ENCODE measurements at regions of chr4 and their contacts with region 1.

Region 1: DNA sequence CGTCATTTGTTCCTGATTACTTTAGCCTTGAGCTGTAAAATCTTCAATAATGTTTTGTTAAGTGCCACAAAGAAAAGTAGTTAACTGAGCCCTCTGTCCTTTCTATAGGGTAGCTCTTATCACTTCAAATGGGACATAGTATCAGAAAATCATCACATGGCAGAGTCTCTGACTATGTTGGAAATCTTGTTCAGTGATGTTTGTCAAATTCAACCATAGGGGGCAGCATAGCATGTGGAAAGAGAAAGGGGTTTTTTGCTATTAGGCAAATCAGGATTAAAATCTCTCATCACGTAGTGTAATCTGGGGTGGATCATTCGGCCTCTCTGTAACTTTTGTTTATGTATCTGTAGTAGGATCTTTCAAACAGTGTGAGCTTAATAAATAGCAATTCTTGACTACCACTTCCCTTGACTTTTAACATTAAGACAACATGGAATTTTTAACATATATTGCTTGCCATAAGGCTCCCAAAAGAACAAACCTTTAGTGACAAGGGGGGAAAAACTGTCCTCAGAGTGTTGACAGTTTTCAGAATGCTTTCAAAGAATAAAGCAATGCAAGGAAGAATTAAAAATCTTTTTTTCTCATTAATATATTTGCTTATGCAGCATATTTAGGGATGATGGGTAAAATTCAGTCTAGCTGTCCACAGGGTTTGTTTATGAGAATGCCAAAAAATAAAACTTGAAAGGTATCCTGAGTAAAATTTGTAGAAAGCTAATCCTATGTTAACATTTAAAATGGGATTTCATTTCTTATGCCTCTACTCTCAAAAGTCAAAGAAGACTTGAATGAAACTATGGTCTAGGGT is 127.2 kb downstream of the FBXW7 start:
- DNase-seq: peak; percentile 36
- ATAC-seq: no peak
- H3K4me3 Mint-ChIP-seq: no peak overlapping the region
- H3K27ac Mint-ChIP-seq: no peak overlapping the region
- H3K4me1 Mint-ChIP-seq: no peaks in the 10 kb centered on the region
- H3K27me3 Mint-ChIP-seq: no peaks in the 10 kb centered on the region

Region 2: DNA sequence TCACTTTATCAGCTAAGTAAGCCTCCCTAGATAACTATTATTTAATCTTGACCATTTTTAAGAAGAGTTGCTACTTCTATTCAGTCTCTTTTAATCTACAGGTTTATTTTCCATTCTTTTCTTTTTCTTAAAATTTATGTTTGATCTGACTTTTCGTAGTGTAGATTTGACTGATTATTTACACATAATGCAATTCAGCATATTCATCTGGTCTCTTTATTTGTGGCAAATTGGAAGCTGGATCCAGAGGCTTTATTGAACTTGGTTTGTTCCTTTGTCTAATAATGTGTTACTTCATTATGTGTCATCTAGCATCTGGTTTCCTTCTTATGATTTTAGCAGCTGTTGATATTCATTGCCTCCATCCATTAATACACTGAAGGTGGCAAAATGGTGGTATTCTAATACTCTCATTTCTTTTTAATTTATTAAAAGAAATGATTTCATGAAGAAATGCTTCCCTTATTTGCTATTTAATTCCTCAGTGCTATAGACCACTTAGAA is 14.1 kb after region 1 on chr4:
- CTCF ChIA-PET with region 1: interaction called, 17 read pairs
- POLR2A ChIA-PET with region 1: no interaction called
- DNase-seq: no peak
- ATAC-seq: no peak
- H3K4me3 Mint-ChIP-seq: no peak overlapping the region
- H3K27ac Mint-ChIP-seq: no peak overlapping the region
- H3K4me1 Mint-ChIP-seq: peaks cover 13% of the 10 kb centered on the region
- H3K27me3 Mint-ChIP-seq: no peaks in the 10 kb centered on the region

Region 3: GRCh38 chr4:152436384-152436783 is 27.7 kb after region 1 on chr4:
- CTCF ChIA-PET with region 1: interaction called, 10 read pairs
- POLR2A ChIA-PET with region 1: no interaction called
- DNase-seq: no peak
- ATAC-seq: no peak
- H3K4me3 Mint-ChIP-seq: no peak overlapping the region
- H3K27ac Mint-ChIP-seq: no peak overlapping the region
- H3K4me1 Mint-ChIP-seq: peaks cover 4% of the 10 kb centered on the region
- H3K27me3 Mint-ChIP-seq: no peaks in the 10 kb centered on the region

Region 4: DNA sequence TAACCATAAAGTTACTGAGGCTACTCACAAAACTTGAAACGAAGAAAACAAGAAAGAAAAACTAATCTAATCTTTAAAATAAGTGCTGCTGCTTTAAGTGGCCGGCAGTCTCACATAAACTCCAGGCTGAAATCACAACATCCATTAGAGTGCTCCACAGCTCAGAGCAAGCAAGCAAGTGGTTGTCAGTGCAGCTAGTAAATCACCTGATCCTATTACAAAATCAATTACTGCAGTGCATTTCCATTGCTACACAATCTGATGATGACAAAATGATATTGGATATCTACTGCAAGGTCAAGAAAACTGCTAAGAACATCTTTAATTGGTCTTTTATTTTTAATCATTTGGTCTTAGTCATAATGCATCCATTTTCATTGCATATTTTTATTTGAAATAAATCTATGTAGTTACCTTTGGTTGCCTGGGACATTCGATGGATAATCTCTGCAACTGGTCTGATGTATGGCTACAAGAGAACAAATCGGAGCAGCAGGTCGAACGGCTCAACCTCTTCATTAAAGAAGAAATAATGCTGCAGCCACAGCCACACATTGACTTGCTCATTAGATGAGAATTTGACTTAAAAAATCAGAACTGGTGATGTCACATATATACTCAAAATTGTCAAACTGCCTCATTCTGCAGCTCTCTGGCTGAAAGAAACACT is 39.5 kb after region 1 on chr4:
- CTCF ChIA-PET with region 1: interaction called, 19 read pairs
- POLR2A ChIA-PET with region 1: no interaction called
- DNase-seq: no peak
- ATAC-seq: no peak
- H3K4me3 Mint-ChIP-seq: no peak overlapping the region
- H3K27ac Mint-ChIP-seq: no peak overlapping the region
- H3K4me1 Mint-ChIP-seq: peaks cover 8% of the 10 kb centered on the region
- H3K27me3 Mint-ChIP-seq: no peaks in the 10 kb centered on the region

Region 5: GRCh38 chr4:152488246-152488645 is 79.5 kb after region 1 on chr4:
- CTCF ChIA-PET with region 1: no interaction called
- POLR2A ChIA-PET with region 1: no interaction called
- DNase-seq: no peak
- ATAC-seq: no peak
- H3K4me3 Mint-ChIP-seq: no peak overlapping the region
- H3K27ac Mint-ChIP-seq: no peak overlapping the region
- H3K4me1 Mint-ChIP-seq: peaks cover 34% of the 10 kb centered on the region
- H3K27me3 Mint-ChIP-seq: no peaks in the 10 kb centered on the region

Region 6: GRCh38 chr4:152640058-152640833 is 231.5 kb after region 1 on chr4:
- CTCF ChIA-PET with region 1: interaction called, 12 read pairs
- POLR2A ChIA-PET with region 1: no interaction called
- DNase-seq: no peak
- ATAC-seq: no peak
- H3K4me3 Mint-ChIP-seq: no peak overlapping the region
- H3K27ac Mint-ChIP-seq: no peak overlapping the region
- H3K4me1 Mint-ChIP-seq: peaks cover 16% of the 10 kb centered on the region
- H3K27me3 Mint-ChIP-seq: no peaks in the 10 kb centered on the region

Region 7: GRCh38 chr4:152735396-152735859 is 326.7 kb after region 1 on chr4:
- CTCF ChIA-PET with region 1: interaction called, 14 read pairs
- POLR2A ChIA-PET with region 1: no interaction called
- DNase-seq: no peak
- ATAC-seq: no peak
- H3K4me3 Mint-ChIP-seq: no peak overlapping the region
- H3K27ac Mint-ChIP-seq: no peak overlapping the region
- H3K4me1 Mint-ChIP-seq: no peaks in the 10 kb centered on the region
- H3K27me3 Mint-ChIP-seq: peaks cover 8% of the 10 kb centered on the region